ENCODE measurements at regions of chr4 and their contacts with region 1.

Region 1: DNA sequence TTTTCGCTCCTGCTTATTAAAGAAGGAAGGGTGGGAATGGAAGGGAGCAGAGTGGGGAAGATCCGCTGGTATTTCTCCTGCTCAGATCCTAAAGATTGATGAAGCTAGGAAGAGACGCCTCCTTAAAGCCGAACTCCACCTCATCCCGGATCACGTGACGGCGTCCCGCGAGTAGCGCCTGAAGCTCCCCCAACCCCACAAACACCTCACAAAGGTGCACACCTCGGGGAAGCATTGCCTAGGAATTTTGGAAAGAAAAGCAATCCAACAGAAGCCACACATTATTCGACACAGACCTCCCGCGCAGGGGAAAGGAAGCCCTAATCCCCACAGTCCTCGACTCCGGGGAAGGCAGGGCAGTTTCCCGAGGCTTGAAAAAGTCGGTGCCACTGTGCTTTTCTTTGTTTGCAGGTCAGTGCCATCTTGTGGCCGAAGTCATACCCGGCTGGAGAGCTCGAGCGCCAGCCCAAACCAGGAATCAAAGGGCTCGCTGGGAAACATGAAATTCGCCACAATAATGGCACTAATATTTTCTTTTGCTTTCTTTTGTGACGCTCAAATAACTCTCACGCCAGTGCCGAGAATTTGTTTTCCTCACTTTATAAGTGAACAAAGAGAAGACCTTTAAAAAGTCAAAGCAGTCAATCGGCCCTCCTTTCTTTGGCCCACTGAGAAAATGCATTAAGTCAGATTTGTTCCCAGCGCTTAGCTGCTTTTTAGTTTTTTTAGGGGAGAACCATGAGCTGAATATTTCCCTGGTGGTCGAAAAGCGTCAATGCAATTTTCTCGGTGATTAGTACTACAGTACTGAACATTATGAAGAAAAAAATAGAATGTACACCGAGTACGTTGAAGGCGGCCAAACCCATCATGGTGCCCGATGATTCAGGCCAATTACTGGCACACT is at the start of gene NPY1R:
- DNase-seq: peak; percentile 78
- H3K4me3 ChIP-seq: peak within 1 kb of the TSS; percentile 47 to 61
- H3K27ac ChIP-seq: no peak within 1 kb of the TSS
- H3K4me1 ChIP-seq: peaks cover 4 to 9% of the 10 kb centered on the region in 2 experiments; a peak in 2 of 4 replicates
- H3K27me3 ChIP-seq: peaks cover 22% of the 10 kb centered on the region; the same call in 1 of the 2 replicates
- CTCF ChIP-seq: peak; percentile 80
- EP300 ChIP-seq: no peak
- RAD21 ChIP-seq: peak; percentile 74
- polyA plus RNA-seq, gene NPY1R: not detected in 2 replicates

Region 2: DNA sequence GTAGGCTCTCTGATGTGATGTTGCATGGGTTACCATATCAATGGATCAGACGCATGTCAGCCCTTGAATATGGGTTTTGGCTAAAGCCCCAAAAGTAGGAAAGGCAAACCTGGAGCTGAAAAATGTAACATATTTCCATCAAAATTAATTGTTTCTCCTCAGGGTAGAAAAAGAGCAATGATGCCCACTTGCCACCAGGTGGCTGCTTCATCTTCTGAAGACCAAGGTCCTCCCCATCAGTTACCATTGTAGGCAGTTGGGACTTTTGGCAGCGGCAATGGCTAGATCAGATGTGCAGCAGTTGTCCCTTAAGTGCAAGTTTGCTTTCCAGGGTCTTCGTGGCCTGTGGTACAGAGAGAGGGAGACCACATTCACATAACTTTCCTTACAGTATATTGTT is 284.3 kb before region 1 on chr4:
- CTCF ChIA-PET with region 1: interaction called, 25 read pairs
- POLR2A ChIA-PET with region 1: no interaction called
- DNase-seq: peak; percentile 24
- H3K4me3 ChIP-seq: no peak overlapping the region
- H3K27ac ChIP-seq: no peak overlapping the region
- H3K4me1 ChIP-seq: no peaks in the 10 kb centered on the region
- H3K27me3 ChIP-seq: no peaks in the 10 kb centered on the region; the same call in 1 of the 2 replicates
- CTCF ChIP-seq: peak; percentile 60
- EP300 ChIP-seq: no peak
- RAD21 ChIP-seq: peak; percentile 49

Region 3: GRCh38 chr4:163085085-163085484 is 247.7 kb before region 1 on chr4:
- CTCF ChIA-PET with region 1: no interaction called
- POLR2A ChIA-PET with region 1: no interaction called
- DNase-seq: no peak
- H3K4me3 ChIP-seq: no peak overlapping the region
- H3K27ac ChIP-seq: no peak overlapping the region
- H3K4me1 ChIP-seq: no peaks in the 10 kb centered on the region
- H3K27me3 ChIP-seq: no peaks in the 10 kb centered on the region
- CTCF ChIP-seq: no peak
- EP300 ChIP-seq: no peak
- RAD21 ChIP-seq: no peak

Region 4: DNA sequence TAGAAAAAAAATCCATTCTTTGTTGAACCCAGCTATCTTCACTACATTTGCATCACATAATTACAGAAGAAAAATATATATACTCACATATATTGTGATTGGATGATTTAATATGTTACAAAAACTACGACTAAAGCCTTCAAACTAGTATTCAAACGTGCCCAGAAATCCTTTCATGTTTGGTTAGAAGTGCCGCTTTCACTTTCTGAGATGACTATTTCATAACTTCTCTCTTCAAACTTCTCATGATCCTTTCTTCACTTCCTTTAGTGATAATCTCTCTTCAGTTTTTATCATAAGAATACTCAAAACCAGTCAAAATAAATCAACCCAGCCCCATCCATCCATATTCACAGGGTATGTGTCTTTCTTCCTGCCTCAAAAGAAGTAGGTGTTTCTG is 115.2 kb before region 1 on chr4:
- CTCF ChIA-PET with region 1: no interaction called
- POLR2A ChIA-PET with region 1: no interaction called
- DNase-seq: no peak
- H3K4me3 ChIP-seq: no peak overlapping the region
- H3K27ac ChIP-seq: no peak overlapping the region
- H3K4me1 ChIP-seq: no peaks in the 10 kb centered on the region
- H3K27me3 ChIP-seq: no peaks in the 10 kb centered on the region
- CTCF ChIP-seq: no peak
- EP300 ChIP-seq: no peak
- RAD21 ChIP-seq: no peak